Cardiac septum (tissue), 1 donor: ENCODE measurements at regions of chr7 and their contacts with region 1.

Region 1: GRCh38 chr7:143305423-143306070 is 10.4 kb upstream of the CLCN1 start:
- DNase-seq: peak; percentile 86

Region 2: DNA sequence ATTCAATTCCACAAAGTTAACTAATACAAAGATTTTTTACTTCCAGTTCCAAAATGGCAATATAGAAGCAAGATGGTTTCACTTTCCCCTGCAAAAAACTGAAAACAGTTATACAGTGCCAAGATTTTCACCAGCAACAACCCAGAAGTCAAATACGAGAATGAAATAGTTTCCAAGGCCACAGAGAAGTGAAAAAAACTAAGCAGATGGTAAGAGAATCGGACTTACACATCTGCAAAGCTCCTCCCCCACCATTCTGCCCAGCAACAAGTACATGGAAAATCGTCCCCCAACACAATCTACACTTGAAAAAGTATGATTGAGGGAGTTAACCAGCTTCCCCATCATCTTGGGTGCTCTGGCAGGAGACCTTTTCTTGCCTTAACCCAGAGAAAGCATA is 313.1 kb before region 1 on chr7:
- intact Hi-C with region 1: no loop called
- DNase-seq: no peak

Region 3: DNA sequence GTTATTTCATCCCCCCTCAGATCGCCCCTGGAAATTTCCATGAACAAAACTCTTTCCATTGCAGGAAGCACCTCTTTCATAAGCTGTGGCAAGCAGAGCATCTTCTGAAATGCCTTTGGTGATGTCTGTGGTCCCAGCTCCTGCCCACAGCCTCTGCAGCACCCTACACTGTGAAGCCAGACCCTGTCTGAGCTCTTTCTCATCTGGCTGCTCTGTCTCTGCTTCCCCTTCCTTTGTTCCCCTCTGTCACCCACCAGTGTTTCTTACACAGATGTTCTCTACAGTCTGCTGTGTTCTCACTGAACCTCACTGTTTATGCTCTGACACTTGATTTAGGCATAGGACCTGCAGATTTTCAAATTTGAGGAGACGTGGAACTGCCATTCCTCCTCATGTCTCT is 124.2 kb before region 1 on chr7:
- intact Hi-C with region 1: no loop called
- DNase-seq: no peak

Region 4: DNA sequence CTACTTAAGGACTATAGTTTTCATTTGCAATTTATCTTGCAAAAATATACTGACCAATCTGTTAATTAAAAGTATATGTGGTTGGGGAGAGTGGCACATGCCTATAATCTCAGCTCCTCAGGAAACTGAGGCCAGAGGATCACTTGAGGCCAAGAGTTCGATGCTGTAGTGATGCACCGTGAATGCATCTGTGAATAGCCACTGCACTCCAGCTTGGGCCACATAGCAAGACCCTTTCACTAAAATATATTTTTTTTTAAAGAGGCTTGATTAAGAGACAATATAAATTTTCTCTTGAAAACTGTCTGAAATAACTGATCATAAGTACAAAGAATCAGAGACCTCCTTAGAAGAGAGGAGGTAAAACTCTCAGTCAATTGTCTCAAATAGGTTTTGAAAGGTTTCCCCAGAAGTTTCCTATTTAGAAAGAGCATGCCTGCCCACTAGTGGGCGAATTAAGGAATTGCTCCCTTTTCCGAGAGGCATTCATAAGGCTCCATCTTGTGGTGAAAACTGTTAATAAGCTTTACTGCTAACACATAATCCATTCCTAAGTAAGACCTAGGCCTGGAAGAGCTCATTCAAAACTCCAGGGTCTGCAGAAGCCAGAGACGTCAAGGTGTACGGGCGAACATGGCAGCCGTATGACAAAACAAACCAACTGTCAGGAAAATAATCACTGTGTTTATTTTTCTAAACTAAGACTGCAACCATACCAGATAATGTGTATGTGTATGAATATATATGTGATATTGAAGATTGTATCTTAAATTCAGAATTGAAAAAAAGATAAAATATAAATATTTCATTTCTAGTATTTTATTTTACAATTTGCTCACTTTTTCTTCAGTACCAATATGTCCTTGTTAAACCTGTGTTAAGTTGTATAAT is 90.5 kb before region 1 on chr7:
- intact Hi-C with region 1: no loop called
- DNase-seq: no peak

Region 5: GRCh38 chr7:143240291-143241168 is 65.0 kb before region 1 on chr7:
- intact Hi-C with region 1: loop called (anchors 1 kb)
- DNase-seq: no peak